ENCODE measurements at regions of chr12 and their contacts with region 1.

Region 1: DNA sequence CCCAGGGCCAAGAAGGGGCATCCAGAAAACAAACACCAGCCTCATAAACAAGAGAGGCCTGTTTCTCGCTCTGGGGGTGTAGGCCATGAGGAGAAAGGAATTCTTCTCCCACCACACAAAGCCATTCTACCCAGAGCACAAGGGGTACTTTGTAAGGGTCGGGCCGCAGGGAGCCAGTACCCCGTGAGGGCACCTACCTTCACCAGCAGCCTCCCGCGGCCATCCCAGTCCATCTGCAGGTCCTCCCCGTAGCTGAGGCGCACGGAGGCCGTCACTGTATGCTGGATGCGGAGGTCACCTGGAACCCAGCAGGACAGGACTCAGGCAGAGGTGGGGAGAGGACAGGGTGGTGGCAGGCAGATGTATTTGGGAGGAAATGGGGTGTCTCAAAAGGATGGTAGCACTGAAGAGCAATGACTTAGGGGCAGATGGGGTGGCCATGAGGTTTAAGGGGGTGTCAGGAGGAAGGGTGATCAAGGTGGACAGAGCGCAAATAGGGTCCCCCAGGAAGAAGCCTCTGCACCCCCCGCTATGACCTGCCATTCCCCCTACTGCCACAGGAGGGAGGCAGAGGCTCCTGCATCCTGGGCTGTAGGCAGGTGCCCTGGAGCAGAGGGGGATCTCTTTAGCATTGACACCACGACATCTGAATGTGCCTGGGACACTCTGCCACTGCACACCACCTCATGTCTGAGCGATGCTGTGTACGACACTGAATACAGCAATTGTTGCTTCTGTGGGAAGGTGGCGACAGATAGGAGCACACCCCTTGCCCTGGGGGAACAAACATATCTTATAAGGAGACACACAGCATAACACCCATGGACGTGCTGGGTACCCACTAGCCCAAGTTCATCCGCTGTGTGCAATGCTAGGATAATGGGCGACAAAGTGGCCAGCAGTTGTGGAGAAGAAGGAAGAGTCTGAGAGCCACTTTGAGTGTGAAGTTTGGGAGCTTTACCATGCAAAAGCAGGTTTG is 61.4 kb downstream of the VWF start:
- DNase-seq: peak; percentile 66
- H3K4me3 Mint-ChIP-seq: no peak overlapping the region
- H3K27ac Mint-ChIP-seq: no peak overlapping the region
- H3K4me1 Mint-ChIP-seq: no peaks in the 10 kb centered on the region
- H3K27me3 Mint-ChIP-seq: peaks cover under 1% of the 10 kb centered on the region

Region 2: GRCh38 chr12:6285063-6285477 is 222.0 kb after region 1 on chr12:
- CTCF ChIA-PET with region 1: interaction called, 33 read pairs
- POLR2A ChIA-PET with region 1: interaction called, 4 read pairs
- intact Hi-C with region 1: loop called (anchors 2 kb)
- DNase-seq: peak; percentile 69
- H3K4me3 Mint-ChIP-seq: no peak overlapping the region
- H3K27ac Mint-ChIP-seq: peak overlapping the region; percentile 19
- H3K4me1 Mint-ChIP-seq: peaks cover 4% of the 10 kb centered on the region
- H3K27me3 Mint-ChIP-seq: peaks cover 19% of the 10 kb centered on the region

Measured in activated CD4-positive, alpha-beta memory T cell treated with anti-CD3 and anti-CD28 coated beads for 36 hours (primary cell).